ENCODE measurements at regions of chr9 and their contacts with region 1.

Region 1: DNA sequence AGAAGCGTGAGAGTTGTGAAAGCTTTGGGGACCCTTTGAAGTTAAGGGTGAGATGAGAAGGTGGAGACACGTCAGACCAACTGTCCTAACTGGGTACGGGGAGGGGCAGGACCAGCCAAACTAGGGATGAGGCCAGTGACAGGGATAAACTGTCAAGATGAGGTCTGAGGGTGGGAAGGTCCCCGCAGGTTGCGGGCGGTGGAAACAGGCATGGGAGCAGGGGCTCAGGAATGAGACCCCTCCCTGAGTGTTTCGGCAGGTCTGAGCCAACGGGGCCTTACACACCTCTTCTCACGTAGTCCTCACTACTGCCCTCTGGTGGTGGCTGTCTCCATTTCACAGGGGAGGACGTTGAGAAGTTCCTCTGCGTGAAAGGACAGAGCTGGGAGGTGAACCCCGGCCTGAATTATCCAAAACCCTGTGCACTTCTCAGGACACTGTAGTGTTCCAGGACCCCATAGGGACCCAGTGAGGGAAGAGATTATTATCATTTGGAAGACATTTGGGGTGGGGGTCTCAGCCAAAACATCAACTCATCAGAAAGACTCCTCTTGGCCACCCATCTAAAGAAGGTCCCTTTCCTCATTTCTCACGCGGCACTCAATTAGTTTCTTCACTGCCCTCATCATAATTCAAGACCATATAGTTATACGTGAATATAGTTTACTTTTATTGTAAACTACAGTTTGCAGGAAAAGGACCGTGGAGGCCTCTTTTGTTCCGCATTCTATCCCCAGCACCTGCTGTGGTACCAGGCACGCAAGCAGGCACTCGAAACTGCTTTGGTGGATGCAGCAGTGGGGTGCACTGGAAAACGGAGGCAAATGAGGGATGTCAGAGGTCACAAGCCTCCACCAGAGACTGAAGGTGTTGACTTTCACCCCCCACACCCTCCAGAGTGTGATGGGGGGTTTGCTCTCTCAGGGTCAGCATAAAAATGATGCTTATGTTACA is 21.7 kb upstream of the NANS start:
- DNase-seq: peak; percentile 80
- CTCF ChIP-seq: peak; percentile 90

Region 2: DNA sequence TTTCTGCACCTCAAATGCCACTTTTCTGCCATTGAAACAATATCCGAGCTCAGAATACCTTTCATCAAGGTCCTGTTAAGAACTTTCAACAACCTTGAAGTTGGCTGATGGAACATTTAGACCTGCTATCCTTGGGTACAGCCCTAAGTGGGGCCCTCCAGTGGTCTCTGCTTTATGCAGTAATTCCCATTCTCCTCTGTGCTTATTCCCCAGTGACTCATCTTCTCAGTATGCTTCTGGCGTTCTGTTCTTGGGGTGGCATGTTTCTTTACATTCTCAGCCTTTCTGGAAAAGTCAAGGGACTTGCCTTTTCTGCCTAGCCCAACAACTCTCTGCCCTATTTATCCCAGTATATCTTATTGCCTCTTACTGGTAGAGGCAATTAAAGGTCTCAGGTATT is 44.6 kb before region 1 on chr9:
- CTCF ChIA-PET with region 1: interaction called, 17 read pairs
- POLR2A ChIA-PET with region 1: no interaction called
- DNase-seq: no peak
- CTCF ChIP-seq: no peak

Region 3: GRCh38 chr9:98002808-98003207 is 32.1 kb before region 1 on chr9:
- CTCF ChIA-PET with region 1: interaction called, 15 read pairs
- POLR2A ChIA-PET with region 1: no interaction called
- DNase-seq: no peak
- CTCF ChIP-seq: no peak

Region 4: GRCh38 chr9:98022447-98022846 is 12.4 kb before region 1 on chr9:
- CTCF ChIA-PET with region 1: interaction called, 42 read pairs
- POLR2A ChIA-PET with region 1: no interaction called
- DNase-seq: no peak
- CTCF ChIP-seq: no peak

Region 5: GRCh38 chr9:98056269-98057137 is 21.6 kb after region 1 on chr9 and contains the start of gene NANS:
- CTCF ChIA-PET with region 1: interaction called, 16 read pairs
- POLR2A ChIA-PET with region 1: interaction called, 13 read pairs
- DNase-seq: peak; percentile 99
- CTCF ChIP-seq: no peak